Kidney (tissue), 22 donors: ENCODE measurements at regions of chr20 and their contacts with region 1.

Region 1: GRCh38 chr20:41173161-41173721 is 35.9 kb downstream of the PLCG1 start:
- DNase-seq: peak; percentile 80 to 93 (median 85)
- H3K4me3 ChIP-seq: no peak overlapping the region
- H3K27ac ChIP-seq: peak overlapping the region in 1 of 2 donors; percentile 8
- H3K4me1 ChIP-seq: peaks cover 0 to 12% (median 0%) of the 10 kb centered on the region in 3 donors
- H3K27me3 ChIP-seq: no peaks in the 10 kb centered on the region
- CTCF ChIP-seq: peak; percentile 90

Region 2: DNA sequence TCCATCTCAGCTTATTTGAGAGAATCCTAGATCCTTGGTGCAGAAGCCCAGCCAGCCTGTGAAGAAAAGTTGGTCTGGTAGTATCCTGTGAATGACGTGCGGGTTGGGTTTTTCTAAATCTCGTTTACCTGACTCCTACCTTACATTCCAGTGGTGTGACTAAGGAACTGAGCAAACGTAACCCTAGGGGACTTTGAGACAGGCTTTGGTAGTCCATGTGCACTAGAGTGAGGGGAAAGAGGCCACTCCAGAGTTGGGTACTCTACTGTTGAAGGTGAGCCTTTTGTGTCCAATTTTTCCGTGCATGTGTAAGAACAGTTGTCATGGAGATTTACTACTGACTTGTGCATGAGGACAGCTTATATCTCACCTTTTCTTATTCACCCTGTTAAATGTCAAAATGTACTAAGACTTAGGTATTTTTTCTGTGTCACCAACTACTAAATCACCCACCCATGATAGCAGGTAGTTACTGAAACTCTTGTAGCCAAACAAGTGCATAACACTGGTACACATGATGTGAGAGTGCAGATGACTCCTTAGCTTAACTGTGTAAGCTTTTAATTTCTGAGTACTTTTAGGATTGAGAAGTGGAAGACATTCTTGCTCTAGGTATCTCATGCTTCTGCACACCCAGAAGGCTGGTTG is 62.2 kb before region 1 on chr20:
- intact Hi-C with region 1: no loop called
- DNase-seq: no peak
- H3K4me3 ChIP-seq: no peak overlapping the region
- H3K27ac ChIP-seq: no peak overlapping the region
- H3K4me1 ChIP-seq: no peaks in the 10 kb centered on the region
- H3K27me3 ChIP-seq: no peaks in the 10 kb centered on the region
- CTCF ChIP-seq: no peak

Region 3: DNA sequence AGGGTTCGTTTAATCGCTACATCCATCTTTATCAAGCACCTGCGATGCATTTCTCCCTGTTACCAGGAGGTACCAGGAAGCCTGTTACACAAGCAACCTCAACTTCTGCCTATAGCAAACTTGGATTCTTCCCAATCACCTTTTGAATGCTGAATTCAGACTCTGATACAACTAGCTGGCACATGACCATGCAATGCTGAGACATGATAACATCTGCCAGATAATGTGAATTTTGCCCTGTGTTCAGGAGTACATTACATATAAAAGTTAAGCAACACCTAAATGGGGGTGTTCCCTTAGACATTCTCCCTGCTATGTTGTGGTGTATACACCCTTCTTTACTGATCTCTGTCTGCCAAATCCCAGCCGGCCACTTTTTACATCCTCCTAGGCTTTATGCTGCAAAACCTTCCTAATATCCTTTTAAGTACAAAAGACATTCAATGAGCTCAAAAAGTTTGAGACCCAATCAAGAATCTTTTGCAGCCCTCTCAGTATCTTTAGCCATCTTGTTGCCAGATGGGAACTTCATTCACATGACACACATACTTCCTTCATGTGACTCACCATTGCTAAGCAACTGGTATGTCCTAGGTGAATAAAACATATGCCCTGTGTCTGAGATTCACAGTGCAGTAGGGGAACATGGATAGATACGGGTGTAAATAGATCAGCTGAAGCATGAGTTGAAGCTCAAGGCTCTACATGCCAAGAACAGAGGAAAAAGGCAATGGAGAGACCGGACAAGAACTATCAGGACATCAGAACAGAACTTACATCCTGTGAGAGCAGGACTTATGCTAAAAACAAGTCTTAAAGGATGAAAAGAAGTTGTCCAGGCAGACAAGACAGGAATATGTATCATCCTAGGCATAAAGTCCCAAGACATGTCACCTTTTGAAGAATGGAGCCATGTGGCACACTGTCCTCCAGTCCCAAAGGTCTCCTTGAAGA is 60.0 kb after region 1 on chr20:
- intact Hi-C with region 1: loop called (anchors 10 kb)
- DNase-seq: no peak
- H3K4me3 ChIP-seq: peak overlapping the region in 2 of 3 donors; percentile 4 to 6
- H3K27ac ChIP-seq: peak overlapping the region; percentile 43 to 54
- H3K4me1 ChIP-seq: peaks cover 0 to 24% (median 18%) of the 10 kb centered on the region in 3 donors
- H3K27me3 ChIP-seq: no peaks in the 10 kb centered on the region
- CTCF ChIP-seq: no peak

Region 4: GRCh38 chr20:41339507-41340326 is 166.5 kb after region 1 on chr20:
- intact Hi-C with region 1: loop called (anchors 5 kb)
- DNase-seq: peak; percentile 85 to 96 (median 88)
- H3K4me3 ChIP-seq: peak overlapping the region; percentile 40 to 82 (median 69)
- H3K27ac ChIP-seq: peak overlapping the region; percentile 88
- H3K4me1 ChIP-seq: peaks cover 0 to 22% (median 18%) of the 10 kb centered on the region in 3 donors
- H3K27me3 ChIP-seq: no peaks in the 10 kb centered on the region
- CTCF ChIP-seq: peak; percentile 97